PC-9 (cell line): ENCODE measurements at regions of chr16 and their contacts with region 1.

Region 1: DNA sequence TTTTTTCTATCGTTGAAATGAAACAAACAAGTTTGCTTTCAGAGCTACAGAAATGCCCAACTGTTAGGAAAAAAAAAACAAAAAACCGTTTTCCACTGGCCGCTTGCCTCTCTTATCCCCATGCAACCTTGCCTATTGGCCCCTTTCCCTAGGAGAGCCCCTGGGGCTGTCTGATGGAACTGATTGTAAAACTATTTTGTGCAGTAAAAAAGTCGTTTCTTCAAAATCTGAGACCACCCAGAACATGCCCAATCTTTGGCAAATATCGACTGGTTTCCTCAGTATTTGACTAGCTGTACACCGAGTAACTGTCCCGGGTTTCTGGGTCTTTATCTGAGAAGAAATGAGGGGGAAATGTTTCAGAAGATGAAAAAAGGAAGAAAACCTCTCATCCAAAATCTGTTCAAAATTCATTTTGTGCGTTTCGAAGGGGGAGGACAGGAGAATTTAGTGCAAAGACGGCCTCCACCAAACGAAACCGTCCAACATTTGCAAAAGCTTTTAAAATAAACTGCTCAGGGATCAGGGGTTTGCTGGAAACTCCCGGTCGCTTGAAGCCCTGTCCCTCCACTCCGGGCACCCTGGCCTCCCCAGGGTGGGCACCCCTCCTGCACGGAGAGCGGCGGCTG is 1.1 kb upstream of the GNAO1 start:
- DNase-seq: no peak
- H3K4me3 ChIP-seq: peak overlapping the region; percentile 65
- H3K27ac ChIP-seq: no peak overlapping the region
- H3K4me1 ChIP-seq: peaks cover 12% of the 10 kb centered on the region
- H3K27me3 ChIP-seq: peaks cover 6% of the 10 kb centered on the region; the same call in 1 of the 2 replicates
- CTCF ChIP-seq: no peak

Region 2: DNA sequence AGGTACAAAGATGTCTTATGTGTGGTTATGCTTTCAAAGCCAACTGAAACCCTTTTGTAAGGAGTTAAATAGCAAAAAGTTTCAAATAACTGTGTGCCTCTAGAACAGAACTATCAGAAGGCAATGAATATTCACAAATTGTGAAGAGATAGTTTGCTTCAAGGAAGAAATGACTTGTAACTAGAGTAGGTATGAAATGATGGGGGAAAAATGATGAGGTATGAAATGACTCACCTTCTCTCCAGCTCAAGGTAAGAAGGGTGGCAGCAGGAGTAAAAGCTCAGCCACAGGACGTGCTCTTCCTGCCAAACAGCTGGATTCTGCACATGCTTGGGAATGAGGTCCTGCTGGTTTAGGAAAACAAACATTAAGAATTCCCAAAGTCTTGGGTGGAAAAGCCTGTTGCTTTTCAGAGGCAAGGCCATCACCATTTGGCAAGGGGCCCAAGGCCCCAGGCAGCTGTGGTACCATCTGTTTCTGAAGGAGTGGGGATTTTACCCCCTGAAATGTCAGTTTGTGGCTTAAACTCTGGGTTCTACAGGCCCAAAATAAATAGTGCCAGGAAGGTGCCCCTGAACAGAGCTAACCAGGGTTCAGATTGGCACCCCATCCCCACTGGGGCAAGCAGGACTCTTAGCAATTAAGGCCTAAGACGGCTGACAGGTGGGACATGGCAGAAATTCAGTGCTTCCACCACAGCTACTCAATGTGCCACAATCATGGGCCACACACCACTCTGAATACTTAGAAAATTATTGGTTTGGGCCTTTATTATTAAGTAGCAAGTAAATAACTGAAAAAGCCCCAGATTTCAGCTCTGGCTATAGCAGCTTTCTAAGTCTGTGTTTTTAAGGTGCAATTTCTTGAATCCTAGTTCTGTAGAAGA is 755.0 kb after region 1 on chr16:
- CTCF ChIA-PET with region 1: no interaction called
- POLR2A ChIA-PET with region 1: interaction called, 10 read pairs
- intact Hi-C with region 1: no loop called
- DNase-seq: peak; percentile 64 to 74
- H3K4me3 ChIP-seq: no peak overlapping the region
- H3K27ac ChIP-seq: peak overlapping the region; percentile 57
- H3K4me1 ChIP-seq: peaks cover 24% of the 10 kb centered on the region
- H3K27me3 ChIP-seq: no peaks in the 10 kb centered on the region
- CTCF ChIP-seq: no peak